Mammary epithelial cell (primary cell): ENCODE measurements at regions of chr1 and their contacts with region 1.

Region 1: GRCh38 chr1:221845650-221846371 is 103.9 kb upstream of the DUSP10 start:
- DNase-seq: peak; percentile 97
- H3K4me3 ChIP-seq: no peak overlapping the region
- H3K27ac ChIP-seq: peak overlapping the region; percentile 96
- H3K4me1 ChIP-seq: peaks cover 28% of the 10 kb centered on the region
- H3K27me3 ChIP-seq: no peaks in the 10 kb centered on the region
- CTCF ChIP-seq: peak in 1 of 2 donors; percentile 10

Region 2: DNA sequence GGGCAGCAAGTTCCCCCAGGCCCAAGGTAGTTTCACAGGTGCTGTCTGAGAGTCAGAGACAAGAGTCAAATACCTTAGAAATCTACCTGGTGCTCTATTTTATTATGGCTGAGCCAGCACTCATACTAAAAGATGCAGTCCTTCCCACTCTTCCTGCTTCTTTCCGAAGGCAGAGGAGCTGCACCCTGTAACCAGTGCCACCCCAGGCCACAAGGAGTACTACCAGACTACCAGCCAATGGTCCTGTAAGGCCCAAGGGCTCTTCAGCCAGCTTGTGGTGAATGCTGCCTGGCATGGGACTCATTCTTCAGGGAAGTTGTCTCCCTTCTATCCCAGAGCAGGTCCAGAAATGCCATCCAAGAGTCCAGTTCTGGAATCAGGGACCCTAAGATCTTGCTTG is 99.9 kb after region 1 on chr1:
- CTCF ChIA-PET with region 1: no interaction called
- dilution Hi-C with region 1: loop called (anchors 5 kb)
- in situ Hi-C with region 1: no loop called
- intact Hi-C with region 1: no loop called
- DNase-seq: no peak
- H3K4me3 ChIP-seq: no peak overlapping the region
- H3K27ac ChIP-seq: no peak overlapping the region
- H3K4me1 ChIP-seq: peaks cover 20% of the 10 kb centered on the region
- H3K27me3 ChIP-seq: no peaks in the 10 kb centered on the region
- CTCF ChIP-seq: no peak

Region 3: GRCh38 chr1:222140206-222140605 is 294.4 kb after region 1 on chr1:
- CTCF ChIA-PET with region 1: no interaction called
- dilution Hi-C with region 1: no loop called
- in situ Hi-C with region 1: no loop called
- intact Hi-C with region 1: no loop called
- DNase-seq: no peak
- H3K4me3 ChIP-seq: no peak overlapping the region
- H3K27ac ChIP-seq: no peak overlapping the region
- H3K4me1 ChIP-seq: no peaks in the 10 kb centered on the region
- H3K27me3 ChIP-seq: no peaks in the 10 kb centered on the region
- CTCF ChIP-seq: no peak